Tibial artery (tissue), 4 donors: ENCODE measurements at regions of chr11 and their contacts with region 1.

Region 1: DNA sequence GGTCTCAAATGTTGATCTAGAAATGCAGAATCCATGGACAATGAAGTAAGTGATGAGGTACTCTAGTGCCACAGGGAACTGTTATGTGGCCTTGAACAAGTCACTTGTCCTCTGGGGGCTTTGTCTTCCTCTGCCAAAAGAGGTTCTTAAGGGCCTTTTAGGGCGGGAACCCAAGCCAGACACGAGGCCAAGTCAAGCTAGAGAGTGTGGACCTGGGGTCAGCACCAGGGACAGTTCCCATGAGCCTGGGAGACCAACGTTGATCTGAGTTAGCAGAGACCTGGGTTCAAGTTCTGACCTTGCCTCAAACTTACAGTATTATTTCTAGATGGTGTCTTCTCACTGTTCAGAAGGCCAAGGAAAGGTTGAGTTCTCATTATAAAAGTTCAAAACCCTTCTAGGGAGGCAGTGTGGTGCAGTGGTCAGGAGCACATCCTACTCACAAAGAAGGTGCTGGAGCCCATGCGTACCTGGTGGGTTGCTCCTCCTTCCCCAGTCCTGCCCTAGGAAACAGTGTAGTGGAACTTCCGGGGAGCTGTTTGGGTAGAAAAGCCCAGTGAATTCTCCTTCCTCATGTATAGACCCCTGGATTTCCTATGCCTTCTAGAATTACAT is 121.5 kb downstream of the CHST1 start:
- DNase-seq: no peak
- H3K4me3 ChIP-seq: no peak overlapping the region
- H3K27ac ChIP-seq: no peak overlapping the region
- H3K4me1 ChIP-seq: no peaks in the 10 kb centered on the region
- H3K27me3 ChIP-seq: peaks cover 0 to 30% of the 10 kb centered on the region in 2 donors
- CTCF ChIP-seq: no peak

Region 2: DNA sequence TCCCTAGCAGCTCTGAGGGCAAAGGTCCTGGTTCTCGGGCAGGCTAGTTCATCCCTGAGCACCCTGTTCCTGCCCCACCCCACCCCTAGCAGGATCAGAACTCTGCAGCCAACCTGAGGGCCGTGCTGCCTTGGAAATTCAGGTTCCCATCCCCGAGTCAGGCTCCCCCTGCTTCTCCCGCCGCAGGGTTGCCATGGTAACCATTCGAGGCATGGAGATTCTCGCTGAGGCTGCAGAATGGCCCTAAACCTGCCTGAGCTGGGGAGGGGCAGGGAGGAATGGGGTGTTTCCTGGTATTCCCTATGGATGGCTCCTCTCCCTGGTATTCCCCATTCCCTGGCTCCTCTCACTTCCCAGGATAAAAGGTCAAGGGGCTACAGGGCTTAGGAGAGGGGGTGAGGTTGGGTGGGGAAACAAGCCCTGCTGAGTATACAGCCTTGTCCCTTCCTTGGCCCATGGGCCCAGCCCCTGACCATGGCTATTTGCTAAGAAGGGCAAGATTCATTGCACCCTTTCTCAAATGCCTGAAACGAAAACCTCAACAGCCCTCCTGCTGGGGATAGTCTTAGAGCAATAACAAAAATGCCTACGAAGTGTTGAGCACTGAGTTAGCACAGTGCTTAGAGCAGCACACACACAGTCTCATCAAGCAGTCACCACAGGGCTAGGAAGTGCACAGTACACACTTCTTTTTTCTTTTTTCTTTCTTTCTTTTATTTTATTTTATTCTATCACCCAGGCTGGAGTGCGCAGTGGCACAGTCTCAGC is 62.8 kb after region 1 on chr11:
- intact Hi-C with region 1: loop called (anchors 10 kb)
- DNase-seq: no peak
- H3K4me3 ChIP-seq: no peak overlapping the region
- H3K27ac ChIP-seq: no peak overlapping the region
- H3K4me1 ChIP-seq: no peaks in the 10 kb centered on the region
- H3K27me3 ChIP-seq: peaks cover 0 to 33% of the 10 kb centered on the region in 2 donors
- CTCF ChIP-seq: no peak